Calu3 (cell line): ENCODE measurements at regions of chr21 and their contacts with region 1.

Region 1: GRCh38 chr21:44677881-44678280 is 4.1 kb downstream of the KRTAP12-1 start:
- DNase-seq: no peak
- H3K4me3 Mint-ChIP-seq: no peak overlapping the region
- H3K27ac Mint-ChIP-seq: no peak overlapping the region
- H3K4me1 Mint-ChIP-seq: no peaks in the 10 kb centered on the region
- H3K27me3 Mint-ChIP-seq: peaks cover 91% of the 10 kb centered on the region
- CTCF ChIP-seq: no peak

Region 2: GRCh38 chr21:44579833-44580144 is 98.1 kb before region 1 on chr21:
- CTCF ChIA-PET with region 1: interaction called, 12 read pairs
- intact Hi-C with region 1: no loop called
- DNase-seq: no peak
- H3K4me3 Mint-ChIP-seq: peak overlapping the region; percentile 54
- H3K27ac Mint-ChIP-seq: no peak overlapping the region
- H3K4me1 Mint-ChIP-seq: peaks cover 12% of the 10 kb centered on the region
- H3K27me3 Mint-ChIP-seq: peaks cover 71% of the 10 kb centered on the region
- CTCF ChIP-seq: no peak

Region 3: DNA sequence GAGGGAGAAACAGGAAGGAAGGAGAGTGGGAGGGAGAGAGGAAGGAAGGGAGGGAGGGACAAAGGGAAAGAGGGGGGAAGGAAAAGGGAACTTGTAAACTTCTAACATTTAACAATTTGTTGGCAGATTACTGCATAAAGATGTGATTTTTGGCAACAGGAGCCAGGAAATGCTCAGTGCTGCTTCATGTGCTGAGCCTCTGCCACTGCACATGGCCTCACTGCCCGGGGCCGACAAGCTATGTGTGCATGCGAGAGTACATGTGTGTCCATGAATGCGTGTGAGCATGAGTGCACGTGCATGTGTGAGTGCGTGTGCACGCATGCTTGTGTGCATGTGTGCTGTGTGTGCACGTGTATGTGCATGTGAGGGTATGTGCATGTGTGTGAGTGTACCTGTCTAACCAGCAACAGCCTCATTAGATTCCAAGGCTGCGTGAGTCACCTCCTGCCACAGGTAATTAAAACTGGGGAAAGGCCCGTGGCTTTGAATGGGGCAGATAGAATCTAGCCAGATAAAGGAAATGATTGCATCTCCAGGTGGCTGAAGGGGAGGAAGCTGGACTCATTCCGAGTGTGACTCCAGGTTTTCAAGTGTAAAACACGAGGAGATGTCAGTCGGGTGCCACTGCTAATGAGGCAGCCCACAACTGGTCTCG is 74.9 kb after region 1 on chr21:
- CTCF ChIA-PET with region 1: no interaction called
- intact Hi-C with region 1: no loop called
- DNase-seq: peak; percentile 63
- H3K4me3 Mint-ChIP-seq: no peak overlapping the region
- H3K27ac Mint-ChIP-seq: no peak overlapping the region
- H3K4me1 Mint-ChIP-seq: no peaks in the 10 kb centered on the region
- H3K27me3 Mint-ChIP-seq: peaks cover 59% of the 10 kb centered on the region
- CTCF ChIP-seq: no peak